Naive thymus-derived CD4-positive, alpha-beta T cell (primary cell): ENCODE measurements at regions of chr6 and their contacts with region 1.

Region 1: DNA sequence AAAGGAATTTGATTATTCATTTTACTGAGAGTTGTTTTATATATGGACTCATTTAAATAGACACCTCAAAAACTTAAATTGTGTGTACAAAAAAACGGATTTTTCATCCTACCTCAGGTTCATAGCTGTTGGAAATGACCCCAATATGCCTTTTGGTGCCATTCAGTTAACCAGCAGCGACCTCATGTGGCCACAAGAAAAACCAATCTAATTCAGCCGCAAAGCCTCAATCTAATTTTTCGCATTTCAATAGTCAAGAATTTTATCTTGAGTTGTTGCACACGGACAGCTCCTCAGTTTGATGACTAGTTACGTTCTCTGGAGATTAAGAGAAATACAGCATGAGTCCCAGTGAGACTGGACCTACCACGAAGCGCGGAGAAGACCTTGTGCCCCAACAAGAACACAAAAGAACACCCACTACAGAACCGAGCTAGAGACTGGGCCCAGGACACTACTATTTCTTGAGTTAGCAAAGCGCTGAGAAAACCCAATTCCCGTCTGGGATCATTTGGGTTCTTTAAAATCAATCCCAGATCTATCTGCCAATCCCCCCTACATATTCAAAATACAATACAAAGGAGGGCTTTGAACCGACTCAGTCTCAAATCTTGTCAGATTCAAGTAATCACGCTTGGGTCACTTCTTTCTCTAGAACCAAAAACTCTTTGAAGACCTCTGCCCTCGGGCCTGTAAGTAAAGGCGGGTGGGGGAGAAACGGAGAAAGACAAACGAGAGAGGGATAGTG is 1.1 kb downstream of the TCP11 start:
- DNase-seq: peak in 6 of 9 donors; percentile 26 to 50 (median 42)
- ATAC-seq: peak; percentile 46
- H3K4me3 ChIP-seq: no peak overlapping the region
- H3K4me3 Mint-ChIP-seq: peak overlapping the region in 9 of 10 donors; percentile 1 to 76 (median 46)
- H3K27ac ChIP-seq: no peak overlapping the region
- H3K27ac Mint-ChIP-seq: peak overlapping the region in 2 of 9 donors; percentile 38 to 44
- H3K4me1 ChIP-seq: no peaks in the 10 kb centered on the region
- H3K4me1 Mint-ChIP-seq: peaks cover 13 to 22% (median 16%) of the 10 kb centered on the region in 7 donors
- H3K27me3 ChIP-seq: no peaks in the 10 kb centered on the region
- H3K27me3 Mint-ChIP-seq: peaks cover 8 to 35% (median 13%) of the 10 kb centered on the region in 5 donors

Region 2: GRCh38 chr6:34459899-34460593 is 680.0 kb before region 1 on chr6:
- CTCF ChIA-PET with region 1: interaction called, 8 read pairs
- POLR2A ChIA-PET with region 1: no interaction called
- intact Hi-C with region 1: loop called in 1 of 2 experiments (anchors 1 kb)
- DNase-seq: peak in 8 of 9 donors; percentile 23 to 55 (median 50)
- ATAC-seq: peak; percentile 82
- H3K4me3 ChIP-seq: no peak overlapping the region
- H3K4me3 Mint-ChIP-seq: no peak overlapping the region
- H3K27ac ChIP-seq: no peak overlapping the region
- H3K27ac Mint-ChIP-seq: no peak overlapping the region
- H3K4me1 ChIP-seq: no peaks in the 10 kb centered on the region
- H3K4me1 Mint-ChIP-seq: peaks cover 0 to 2% (median under 1%) of the 10 kb centered on the region in 7 donors
- H3K27me3 ChIP-seq: no peaks in the 10 kb centered on the region
- H3K27me3 Mint-ChIP-seq: peaks cover 4 to 24% (median 17%) of the 10 kb centered on the region in 5 donors

Region 3: GRCh38 chr6:34638834-34639736 is 501.0 kb before region 1 on chr6:
- CTCF ChIA-PET with region 1: interaction called, 3 read pairs
- POLR2A ChIA-PET with region 1: no interaction called
- intact Hi-C with region 1: loop called in 1 of 2 experiments (anchors 1 kb)
- DNase-seq: no peak
- ATAC-seq: no peak
- H3K4me3 ChIP-seq: no peak overlapping the region
- H3K4me3 Mint-ChIP-seq: no peak overlapping the region
- H3K27ac ChIP-seq: no peak overlapping the region
- H3K27ac Mint-ChIP-seq: peak overlapping the region in 2 of 9 donors; percentile 5 to 39
- H3K4me1 ChIP-seq: no peaks in the 10 kb centered on the region
- H3K4me1 Mint-ChIP-seq: peaks cover 0 to 20% (median 8%) of the 10 kb centered on the region in 7 donors
- H3K27me3 ChIP-seq: no peaks in the 10 kb centered on the region
- H3K27me3 Mint-ChIP-seq: no peaks in the 10 kb centered on the region

Region 4: GRCh38 chr6:34986845-34987246 is 153.2 kb before region 1 on chr6:
- CTCF ChIA-PET with region 1: interaction called, 16 read pairs
- POLR2A ChIA-PET with region 1: no interaction called
- intact Hi-C with region 1: loop called in 1 of 2 experiments (anchors 1 kb)
- DNase-seq: peak; percentile 23 to 72 (median 59)
- ATAC-seq: peak; percentile 72
- H3K4me3 ChIP-seq: no peak overlapping the region
- H3K4me3 Mint-ChIP-seq: no peak overlapping the region
- H3K27ac ChIP-seq: no peak overlapping the region
- H3K27ac Mint-ChIP-seq: no peak overlapping the region
- H3K4me1 ChIP-seq: no peaks in the 10 kb centered on the region
- H3K4me1 Mint-ChIP-seq: no peaks in the 10 kb centered on the region
- H3K27me3 ChIP-seq: no peaks in the 10 kb centered on the region
- H3K27me3 Mint-ChIP-seq: no peaks in the 10 kb centered on the region

Region 5: DNA sequence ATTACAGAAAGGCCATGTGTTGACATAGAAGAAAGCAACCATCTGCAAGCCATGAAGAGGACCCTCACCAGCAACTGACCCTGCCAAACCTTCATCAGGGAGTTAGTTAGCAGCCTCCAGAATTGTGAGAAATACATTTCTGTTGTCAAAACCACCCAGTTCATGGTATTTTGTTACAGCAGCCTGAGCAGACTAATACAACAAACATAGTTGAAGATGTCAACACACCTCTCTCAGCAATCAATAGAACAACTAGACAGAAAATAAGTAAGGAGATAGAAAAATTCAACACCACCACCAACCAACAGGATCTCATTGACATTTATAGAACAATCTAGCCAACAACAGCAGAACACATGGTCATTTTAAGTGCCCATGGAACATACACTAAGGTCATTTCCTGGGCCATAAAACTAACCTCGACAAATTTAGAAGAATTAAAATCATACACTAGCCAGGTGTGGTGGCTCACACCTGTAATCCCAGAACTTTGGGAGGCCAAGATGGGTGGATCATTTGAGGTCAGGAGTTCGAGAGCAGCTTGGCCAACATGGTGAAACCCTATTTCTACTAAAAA is 31.7 kb before region 1 on chr6:
- CTCF ChIA-PET with region 1: no interaction called
- POLR2A ChIA-PET with region 1: no interaction called
- intact Hi-C with region 1: no loop called
- DNase-seq: no peak
- ATAC-seq: no peak
- H3K4me3 ChIP-seq: no peak overlapping the region
- H3K4me3 Mint-ChIP-seq: no peak overlapping the region
- H3K27ac ChIP-seq: no peak overlapping the region
- H3K27ac Mint-ChIP-seq: no peak overlapping the region
- H3K4me1 ChIP-seq: no peaks in the 10 kb centered on the region
- H3K4me1 Mint-ChIP-seq: peaks cover 0 to 3% (median 0%) of the 10 kb centered on the region in 7 donors
- H3K27me3 ChIP-seq: no peaks in the 10 kb centered on the region
- H3K27me3 Mint-ChIP-seq: peaks cover 9 to 14% (median 12%) of the 10 kb centered on the region in 5 donors

Region 6: GRCh38 chr6:35124356-35124755 is 15.7 kb before region 1 on chr6:
- CTCF ChIA-PET with region 1: no interaction called
- POLR2A ChIA-PET with region 1: no interaction called
- intact Hi-C with region 1: no loop called
- DNase-seq: no peak
- ATAC-seq: no peak
- H3K4me3 ChIP-seq: no peak overlapping the region
- H3K4me3 Mint-ChIP-seq: no peak overlapping the region
- H3K27ac ChIP-seq: no peak overlapping the region
- H3K27ac Mint-ChIP-seq: no peak overlapping the region
- H3K4me1 ChIP-seq: no peaks in the 10 kb centered on the region
- H3K4me1 Mint-ChIP-seq: no peaks in the 10 kb centered on the region
- H3K27me3 ChIP-seq: no peaks in the 10 kb centered on the region
- H3K27me3 Mint-ChIP-seq: peaks cover 0 to 35% (median 0%) of the 10 kb centered on the region in 5 donors